Esophagus muscularis mucosa (tissue), 4 donors: ENCODE measurements at regions of chr1 and their contacts with region 1.

Region 1: DNA sequence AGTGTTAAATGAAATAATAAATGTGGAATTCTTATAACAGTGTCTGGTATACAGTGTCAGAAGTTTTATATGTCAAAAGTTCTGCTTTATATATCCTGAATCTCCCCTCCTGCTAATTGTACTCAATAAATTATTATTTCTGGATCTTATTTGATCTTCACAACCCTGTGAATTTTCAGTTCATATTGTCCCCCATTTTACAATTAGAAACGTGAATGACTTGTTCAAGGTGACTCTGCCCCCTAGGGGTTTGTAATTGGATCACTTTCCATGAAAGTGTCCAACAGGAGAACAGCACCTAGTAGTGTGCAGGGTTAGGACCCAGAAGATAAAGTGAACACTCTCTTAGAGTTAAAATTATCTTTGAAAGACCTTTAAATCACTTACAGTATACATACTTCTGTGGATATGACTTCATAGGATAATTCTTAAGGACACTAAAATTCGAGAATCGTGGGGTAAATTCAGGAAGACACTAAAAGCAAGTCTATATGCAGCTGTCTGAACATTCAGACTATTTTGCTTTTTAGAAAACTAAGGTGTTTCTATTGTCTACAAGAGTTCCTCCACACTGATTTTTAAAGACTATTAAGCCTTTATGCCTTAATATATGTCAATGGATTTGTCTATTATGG is 4.5 kb upstream of the DDR2 start:
- DNase-seq: no peak
- H3K4me3 ChIP-seq: no peak overlapping the region
- H3K27ac ChIP-seq: peak overlapping the region; percentile 76 to 82 (median 80)
- H3K4me1 ChIP-seq: peaks cover 19 to 67% (median 63%) of the 10 kb centered on the region in 4 donors
- H3K27me3 ChIP-seq: no peaks in the 10 kb centered on the region
- CTCF ChIP-seq: peak in 2 of 3 experiments; percentile 23 to 47
- EP300 ChIP-seq: no peak
- POLR2A ChIP-seq: no peak

Region 2: DNA sequence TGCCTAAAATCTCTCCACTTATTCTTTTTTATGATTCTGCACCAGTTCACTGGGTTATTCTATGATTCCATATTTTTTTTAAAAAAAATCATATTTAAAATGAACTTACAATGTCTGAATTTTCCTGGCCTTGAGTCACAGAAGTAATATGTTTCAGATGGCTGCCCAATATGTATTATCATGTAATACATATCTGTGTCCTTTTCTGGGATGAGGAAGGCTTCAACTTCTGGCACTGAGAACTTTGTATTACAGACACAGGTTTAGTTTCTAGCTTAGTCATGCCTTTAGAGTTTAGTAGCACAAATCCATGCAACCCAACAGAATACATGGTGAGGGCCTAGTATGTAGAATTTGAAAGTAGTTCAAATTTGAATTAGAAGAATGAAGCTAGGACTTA is 154.9 kb after region 1 on chr1:
- intact Hi-C with region 1: loop called (anchors 5 kb)
- DNase-seq: no peak
- H3K4me3 ChIP-seq: no peak overlapping the region
- H3K27ac ChIP-seq: no peak overlapping the region
- H3K4me1 ChIP-seq: no peaks in the 10 kb centered on the region
- H3K27me3 ChIP-seq: no peaks in the 10 kb centered on the region
- CTCF ChIP-seq: no peak
- EP300 ChIP-seq: no peak
- POLR2A ChIP-seq: no peak